Activated CD8-positive, alpha-beta T cell treated with anti-CD3 and anti-CD28 coated beads for 36 hours (primary cell): ENCODE measurements at regions of chr20 and their contacts with region 1.

Region 1: GRCh38 chr20:49384437-49385088 is 97.9 kb downstream of the KCNB1 start:
- DNase-seq: peak; percentile 84
- ATAC-seq: peak; percentile 62
- H3K4me3 Mint-ChIP-seq: no peak overlapping the region
- H3K27ac Mint-ChIP-seq: no peak overlapping the region
- H3K4me1 Mint-ChIP-seq: no peaks in the 10 kb centered on the region
- H3K27me3 Mint-ChIP-seq: peaks cover 21% of the 10 kb centered on the region
- CTCF ChIP-seq: peak; percentile 81

Region 2: DNA sequence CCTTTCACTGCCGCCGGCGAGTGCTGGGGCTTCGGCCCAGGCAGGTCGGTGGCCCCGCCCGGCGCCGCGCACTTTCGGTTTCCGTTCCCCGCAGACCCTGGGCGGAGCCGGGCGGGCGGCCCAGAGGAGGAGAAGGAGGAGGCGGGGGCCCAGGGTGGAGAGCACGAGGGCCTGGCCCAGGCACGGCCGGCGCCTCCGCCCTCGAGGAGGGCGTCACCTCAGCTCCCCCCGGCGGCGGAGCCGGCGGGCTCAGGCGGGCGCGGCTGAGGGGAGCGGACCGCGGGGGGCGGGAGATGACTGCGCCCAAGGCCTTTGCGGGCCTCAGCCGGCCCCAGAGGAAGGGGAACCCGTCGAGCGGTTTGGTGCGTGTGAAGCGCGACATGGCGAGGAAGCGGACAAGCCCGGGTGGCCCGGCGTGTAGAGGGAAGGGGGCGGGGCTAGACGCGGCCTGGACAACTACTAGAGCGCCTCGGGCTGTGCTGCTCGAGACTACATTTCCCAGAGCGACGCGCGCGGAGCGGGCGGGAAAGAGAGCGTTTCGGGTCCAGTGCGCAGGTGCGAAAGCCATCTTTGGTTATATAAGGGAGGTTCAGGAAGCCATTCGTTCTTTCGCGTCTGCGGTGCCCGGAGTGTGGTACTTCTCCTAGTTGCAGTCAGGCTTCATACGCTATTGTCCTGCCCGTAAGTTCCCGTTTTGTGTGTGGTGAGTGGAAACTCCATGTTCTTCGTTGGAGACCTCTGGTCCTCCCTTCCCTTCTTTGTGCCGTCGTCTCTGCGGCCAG is 106.3 kb before region 1 on chr20 and contains the start of gene ZNFX1:
- CTCF ChIA-PET with region 1: no interaction called
- POLR2A ChIA-PET with region 1: no interaction called
- intact Hi-C with region 1: no loop called
- DNase-seq: peak; percentile 100
- ATAC-seq: peak; percentile 81
- H3K4me3 Mint-ChIP-seq: peak within 1 kb of the TSS; percentile 100
- H3K27ac Mint-ChIP-seq: peak within 1 kb of the TSS; percentile 100
- H3K4me1 Mint-ChIP-seq: peaks cover 45% of the 10 kb centered on the region
- H3K27me3 Mint-ChIP-seq: peaks cover 2% of the 10 kb centered on the region
- CTCF ChIP-seq: no peak
- total RNA-seq, gene ZNFX1: 27.4 to 27.7 TPM

Region 3: DNA sequence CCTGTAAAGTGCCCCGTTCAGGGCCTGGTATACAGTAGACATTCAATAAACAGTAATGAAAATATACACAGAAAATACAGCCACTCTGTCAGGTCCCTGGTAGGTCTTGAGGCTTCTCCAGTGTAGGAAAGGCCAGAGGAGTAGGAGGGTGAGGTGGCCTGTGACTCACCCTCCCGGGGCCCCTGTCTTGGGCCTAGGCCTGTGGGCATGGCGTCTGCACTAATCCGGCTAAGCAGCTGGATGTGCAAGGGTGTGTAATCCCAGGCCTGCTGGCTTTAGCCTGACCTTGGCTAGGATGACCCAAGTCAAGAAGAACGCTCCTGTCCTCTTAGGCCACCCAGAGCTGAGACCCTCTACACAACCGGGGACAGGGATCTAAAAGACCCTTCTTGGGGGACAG is 13.0 kb after region 1 on chr20:
- CTCF ChIA-PET with region 1: interaction called, 13 read pairs
- POLR2A ChIA-PET with region 1: no interaction called
- intact Hi-C with region 1: no loop called
- DNase-seq: no peak
- ATAC-seq: no peak
- H3K4me3 Mint-ChIP-seq: no peak overlapping the region
- H3K27ac Mint-ChIP-seq: no peak overlapping the region
- H3K4me1 Mint-ChIP-seq: no peaks in the 10 kb centered on the region
- H3K27me3 Mint-ChIP-seq: peaks cover 2% of the 10 kb centered on the region
- CTCF ChIP-seq: no peak

Region 4: GRCh38 chr20:49508435-49509199 is 124.1 kb after region 1 on chr20:
- CTCF ChIA-PET with region 1: interaction called, 10 read pairs
- POLR2A ChIA-PET with region 1: no interaction called
- intact Hi-C with region 1: no loop called
- DNase-seq: peak; percentile 10
- ATAC-seq: peak; percentile 53
- H3K4me3 Mint-ChIP-seq: no peak overlapping the region
- H3K27ac Mint-ChIP-seq: no peak overlapping the region
- H3K4me1 Mint-ChIP-seq: no peaks in the 10 kb centered on the region
- H3K27me3 Mint-ChIP-seq: peaks cover 28% of the 10 kb centered on the region
- CTCF ChIP-seq: peak; percentile 60